ENCODE measurements at regions of chr10 and their contacts with region 1.

Region 1: GRCh38 chr10:7872041-7872442 is 53.7 kb downstream of the TAF3 start:
- DNase-seq: peak in 3 of 14 experiments; percentile 39 to 56 (median 50)
- ATAC-seq: no peak
- H3K4me3 ChIP-seq: no peak overlapping the region
- H3K4me3 Mint-ChIP-seq: peak overlapping the region; percentile 69
- H3K27ac ChIP-seq: no peak overlapping the region
- H3K27ac Mint-ChIP-seq: no peak overlapping the region
- H3K4me1 ChIP-seq: no peaks in the 10 kb centered on the region
- H3K4me1 Mint-ChIP-seq: peaks cover 25% of the 10 kb centered on the region
- H3K27me3 ChIP-seq: no peaks in the 10 kb centered on the region
- H3K27me3 Mint-ChIP-seq: no peaks in the 10 kb centered on the region
- CTCF ChIP-seq: peak; percentile 88

Region 2: GRCh38 chr10:8473205-8473604 is 601.2 kb after region 1 on chr10:
- CTCF ChIA-PET with region 1: no interaction called
- POLR2A ChIA-PET with region 1: no interaction called
- intact Hi-C with region 1: loop called (anchors 1 kb)
- DNase-seq: peak in 5 of 14 experiments; percentile 17 to 78 (median 68)
- ATAC-seq: peak; percentile 83
- H3K4me3 ChIP-seq: no peak overlapping the region
- H3K4me3 Mint-ChIP-seq: no peak overlapping the region
- H3K27ac ChIP-seq: no peak overlapping the region
- H3K27ac Mint-ChIP-seq: no peak overlapping the region
- H3K4me1 ChIP-seq: no peaks in the 10 kb centered on the region
- H3K4me1 Mint-ChIP-seq: no peaks in the 10 kb centered on the region
- H3K27me3 ChIP-seq: no peaks in the 10 kb centered on the region
- H3K27me3 Mint-ChIP-seq: peaks cover 28% of the 10 kb centered on the region
- CTCF ChIP-seq: peak; percentile 43

Region 3: DNA sequence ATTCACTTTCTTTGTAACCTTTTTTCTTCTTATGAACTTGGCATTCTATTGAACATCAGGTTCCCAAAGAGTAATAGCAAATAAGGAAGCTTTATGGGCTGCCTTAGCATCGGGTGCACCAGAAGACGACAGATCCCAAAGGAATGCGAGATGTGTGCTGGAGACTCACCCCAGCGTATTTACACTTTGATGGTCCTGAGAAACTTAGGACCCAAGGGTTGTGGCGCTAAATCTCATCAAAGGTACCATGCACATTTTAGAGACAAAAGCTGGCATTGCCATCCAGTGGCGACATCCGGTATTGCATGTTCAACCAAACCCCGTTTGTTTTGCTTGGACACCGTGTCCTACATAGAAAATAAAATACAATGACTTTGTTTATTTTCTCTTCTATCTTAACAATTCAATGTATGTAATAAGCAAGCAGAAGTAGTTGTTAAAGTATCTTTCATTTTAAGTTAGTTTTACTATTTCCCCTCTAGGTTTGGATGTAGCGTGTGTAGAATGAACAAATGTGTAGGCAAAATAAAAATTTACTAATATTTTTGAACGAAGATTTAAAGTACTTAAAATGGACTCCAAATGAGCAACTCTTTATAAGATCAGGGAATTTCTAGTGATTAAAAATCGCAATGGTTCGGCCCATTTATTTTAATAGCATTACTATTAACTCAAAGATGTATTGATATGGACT is 1337.2 kb after region 1 on chr10:
- CTCF ChIA-PET with region 1: interaction called, 8 read pairs
- POLR2A ChIA-PET with region 1: no interaction called
- intact Hi-C with region 1: loop called (anchors 1 kb)
- DNase-seq: peak; percentile 51 to 81 (median 69)
- ATAC-seq: peak; percentile 49
- H3K4me3 ChIP-seq: no peak overlapping the region
- H3K4me3 Mint-ChIP-seq: no peak overlapping the region
- H3K27ac ChIP-seq: no peak overlapping the region
- H3K27ac Mint-ChIP-seq: no peak overlapping the region
- H3K4me1 ChIP-seq: peaks cover 3% of the 10 kb centered on the region
- H3K4me1 Mint-ChIP-seq: peaks cover 8% of the 10 kb centered on the region
- H3K27me3 ChIP-seq: peaks cover 0 to 5% of the 10 kb centered on the region in 2 experiments
- H3K27me3 Mint-ChIP-seq: peaks cover 15% of the 10 kb centered on the region
- CTCF ChIP-seq: peak; percentile 98

Region 4: DNA sequence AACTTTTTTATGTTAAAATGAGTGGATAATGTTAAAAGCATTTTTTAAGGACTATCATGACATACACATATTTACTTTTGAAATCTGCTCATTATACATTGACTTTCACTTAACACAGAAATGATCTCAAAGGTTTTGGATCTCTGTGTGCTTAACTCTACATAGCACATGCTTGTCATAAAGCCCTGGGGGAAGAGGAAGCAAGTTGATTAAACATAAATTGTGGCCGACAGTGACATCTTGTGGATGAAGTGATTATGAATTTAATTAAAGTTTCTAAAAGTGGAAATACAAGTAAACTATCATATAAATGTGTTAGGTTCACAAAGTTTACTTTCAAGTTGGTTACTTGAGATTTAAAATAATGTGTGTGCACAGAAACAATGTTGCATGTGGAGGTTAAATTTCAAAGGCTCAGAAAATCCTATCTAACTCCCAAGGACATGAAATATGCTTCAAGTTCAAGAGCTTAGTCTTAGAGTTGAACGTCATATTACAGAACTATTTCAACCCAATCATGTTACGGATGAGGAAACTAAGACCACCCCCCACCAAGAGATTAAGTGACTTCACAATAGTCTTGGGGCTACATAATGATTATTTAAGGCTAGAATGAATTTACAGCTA is 1430.2 kb after region 1 on chr10:
- CTCF ChIA-PET with region 1: no interaction called
- POLR2A ChIA-PET with region 1: no interaction called
- intact Hi-C with region 1: loop called (anchors 1 kb)
- DNase-seq: peak in 4 of 14 experiments; percentile 25 to 70 (median 64)
- ATAC-seq: peak; percentile 49
- H3K4me3 ChIP-seq: no peak overlapping the region
- H3K4me3 Mint-ChIP-seq: no peak overlapping the region
- H3K27ac ChIP-seq: no peak overlapping the region
- H3K27ac Mint-ChIP-seq: no peak overlapping the region
- H3K4me1 ChIP-seq: no peaks in the 10 kb centered on the region
- H3K4me1 Mint-ChIP-seq: no peaks in the 10 kb centered on the region
- H3K27me3 ChIP-seq: no peaks in the 10 kb centered on the region
- H3K27me3 Mint-ChIP-seq: peaks cover 19% of the 10 kb centered on the region
- CTCF ChIP-seq: peak; percentile 64

Measured in CD4-positive, alpha-beta T cell (primary cell).